Activated CD8-positive, alpha-beta T cell treated with anti-CD3 and anti-CD28 coated beads for 36 hours (primary cell): ENCODE measurements at regions of chr22 and their contacts with region 1.

Region 1: DNA sequence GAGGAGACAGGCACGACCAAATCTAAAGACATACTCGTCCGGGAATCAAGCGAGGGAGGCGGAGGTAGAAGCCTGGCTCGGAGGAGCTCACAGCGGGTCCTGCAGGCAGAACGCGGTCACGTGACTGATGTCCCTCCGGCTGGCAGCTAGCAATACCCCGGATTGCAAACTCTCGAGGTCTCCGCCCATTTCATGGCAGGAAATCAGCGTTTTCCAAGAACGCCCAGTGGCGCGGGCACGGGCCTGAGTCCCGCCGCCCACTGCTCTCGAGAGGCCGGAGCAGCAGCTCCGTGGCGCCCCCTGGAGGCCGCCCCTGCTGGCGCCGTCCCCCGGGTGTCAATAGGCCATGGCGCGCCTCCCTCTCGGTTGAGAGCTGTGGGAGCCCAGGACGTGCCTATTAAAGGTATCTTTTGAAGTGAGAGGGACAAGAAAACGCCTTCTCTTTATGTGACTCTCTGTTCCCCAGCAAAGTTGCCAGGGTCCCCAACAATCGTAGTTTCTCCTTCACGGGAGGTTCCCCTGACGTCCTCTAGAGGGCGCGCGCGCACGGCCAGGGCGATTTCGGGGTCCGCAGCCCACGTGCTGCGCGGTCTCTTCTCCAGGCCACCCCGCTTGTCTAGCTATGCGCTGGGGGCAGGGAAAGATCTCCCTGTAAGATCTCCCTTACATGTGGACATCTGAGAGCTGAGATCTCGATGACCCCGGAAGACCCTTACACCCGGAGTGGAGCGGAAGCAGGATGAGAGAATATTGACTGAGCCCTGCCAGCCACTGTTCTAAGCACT is 37.3 kb upstream of the RBFOX2 start:
- DNase-seq: peak; percentile 85
- ATAC-seq: peak; percentile 89
- H3K4me3 Mint-ChIP-seq: peak overlapping the region; percentile 67
- H3K27ac Mint-ChIP-seq: peak overlapping the region; percentile 89
- H3K4me1 Mint-ChIP-seq: peaks cover 8% of the 10 kb centered on the region
- H3K27me3 Mint-ChIP-seq: peaks cover 1% of the 10 kb centered on the region
- CTCF ChIP-seq: peak; percentile 100

Region 2: DNA sequence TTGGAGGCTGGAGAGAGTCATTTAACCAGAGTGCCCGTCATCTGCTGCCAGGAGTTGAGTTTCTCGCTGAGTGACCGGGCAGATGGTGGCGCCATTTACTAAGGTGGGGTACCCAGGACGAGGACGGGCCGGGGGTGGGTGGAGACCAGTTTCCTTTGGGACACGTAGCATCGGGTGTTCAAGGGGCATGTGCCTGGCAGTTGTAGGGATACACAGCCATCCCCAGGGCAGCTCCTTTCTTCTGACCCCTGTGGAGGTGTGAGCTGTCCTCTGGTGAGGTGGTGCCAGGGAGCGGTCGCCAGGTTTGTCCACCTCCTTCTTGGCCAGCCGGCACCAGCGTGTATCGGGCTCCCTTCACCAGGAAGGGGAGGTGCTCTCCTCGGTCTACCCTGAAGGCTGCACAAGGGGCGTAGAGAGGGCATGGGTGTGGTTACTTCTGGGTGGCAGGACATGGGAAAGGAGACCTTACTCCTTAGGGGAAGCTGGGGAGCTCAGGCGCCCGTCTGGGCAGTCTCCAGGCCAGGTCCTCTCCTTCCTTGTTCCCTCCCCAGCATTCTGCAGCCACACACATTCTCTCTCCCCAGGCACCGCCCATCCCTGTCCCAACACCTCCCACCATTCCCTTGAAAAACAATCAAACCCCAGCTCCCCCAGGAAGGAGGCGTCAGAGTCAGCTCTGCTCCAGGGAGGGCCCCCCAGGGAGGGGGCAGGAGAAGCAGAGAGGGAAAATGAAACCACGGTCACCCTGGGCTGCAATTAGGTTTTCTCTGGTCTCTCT is 438.5 kb before region 1 on chr22:
- CTCF ChIA-PET with region 1: interaction called, 11 read pairs
- POLR2A ChIA-PET with region 1: interaction called, 3 read pairs
- intact Hi-C with region 1: no loop called
- DNase-seq: peak; percentile 87
- ATAC-seq: peak; percentile 69
- H3K4me3 Mint-ChIP-seq: peak overlapping the region; percentile 78
- H3K27ac Mint-ChIP-seq: peak overlapping the region; percentile 86
- H3K4me1 Mint-ChIP-seq: peaks cover 26% of the 10 kb centered on the region
- H3K27me3 Mint-ChIP-seq: peaks cover 7% of the 10 kb centered on the region
- CTCF ChIP-seq: peak; percentile 58

Region 3: GRCh38 chr22:35944458-35944857 is 121.5 kb before region 1 on chr22:
- CTCF ChIA-PET with region 1: interaction called, 10 read pairs
- POLR2A ChIA-PET with region 1: no interaction called
- intact Hi-C with region 1: no loop called
- DNase-seq: no peak
- ATAC-seq: no peak
- H3K4me3 Mint-ChIP-seq: no peak overlapping the region
- H3K27ac Mint-ChIP-seq: no peak overlapping the region
- H3K4me1 Mint-ChIP-seq: no peaks in the 10 kb centered on the region
- H3K27me3 Mint-ChIP-seq: peaks cover 3% of the 10 kb centered on the region
- CTCF ChIP-seq: no peak

Region 4: GRCh38 chr22:36037102-36037758 is 28.7 kb before region 1 on chr22:
- CTCF ChIA-PET with region 1: interaction called, 38 read pairs
- POLR2A ChIA-PET with region 1: no interaction called
- intact Hi-C with region 1: no loop called
- DNase-seq: no peak
- ATAC-seq: no peak
- H3K4me3 Mint-ChIP-seq: no peak overlapping the region
- H3K27ac Mint-ChIP-seq: no peak overlapping the region
- H3K4me1 Mint-ChIP-seq: no peaks in the 10 kb centered on the region
- H3K27me3 Mint-ChIP-seq: peaks cover 27% of the 10 kb centered on the region
- CTCF ChIP-seq: no peak

Region 5: DNA sequence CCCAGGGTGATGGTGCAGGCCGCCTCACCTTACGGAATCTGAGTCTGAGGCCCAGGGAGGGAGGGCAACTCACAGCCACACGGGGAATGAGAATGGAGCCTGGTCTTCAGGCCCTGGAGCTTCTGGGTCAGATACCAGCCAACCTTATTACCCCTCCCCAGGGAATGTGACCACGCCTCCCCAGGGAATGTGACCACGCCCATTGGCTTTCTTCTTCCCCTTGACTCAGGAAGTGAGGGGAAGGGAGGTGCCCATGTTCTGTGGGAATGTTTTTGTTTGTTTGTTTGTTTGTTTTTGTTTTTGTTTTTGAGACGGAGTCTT is 20.2 kb after region 1 on chr22:
- CTCF ChIA-PET with region 1: interaction called, 94 read pairs
- POLR2A ChIA-PET with region 1: no interaction called
- intact Hi-C with region 1: no loop called
- DNase-seq: no peak
- ATAC-seq: no peak
- H3K4me3 Mint-ChIP-seq: no peak overlapping the region
- H3K27ac Mint-ChIP-seq: no peak overlapping the region
- H3K4me1 Mint-ChIP-seq: no peaks in the 10 kb centered on the region
- H3K27me3 Mint-ChIP-seq: no peaks in the 10 kb centered on the region
- CTCF ChIP-seq: no peak

Region 6: DNA sequence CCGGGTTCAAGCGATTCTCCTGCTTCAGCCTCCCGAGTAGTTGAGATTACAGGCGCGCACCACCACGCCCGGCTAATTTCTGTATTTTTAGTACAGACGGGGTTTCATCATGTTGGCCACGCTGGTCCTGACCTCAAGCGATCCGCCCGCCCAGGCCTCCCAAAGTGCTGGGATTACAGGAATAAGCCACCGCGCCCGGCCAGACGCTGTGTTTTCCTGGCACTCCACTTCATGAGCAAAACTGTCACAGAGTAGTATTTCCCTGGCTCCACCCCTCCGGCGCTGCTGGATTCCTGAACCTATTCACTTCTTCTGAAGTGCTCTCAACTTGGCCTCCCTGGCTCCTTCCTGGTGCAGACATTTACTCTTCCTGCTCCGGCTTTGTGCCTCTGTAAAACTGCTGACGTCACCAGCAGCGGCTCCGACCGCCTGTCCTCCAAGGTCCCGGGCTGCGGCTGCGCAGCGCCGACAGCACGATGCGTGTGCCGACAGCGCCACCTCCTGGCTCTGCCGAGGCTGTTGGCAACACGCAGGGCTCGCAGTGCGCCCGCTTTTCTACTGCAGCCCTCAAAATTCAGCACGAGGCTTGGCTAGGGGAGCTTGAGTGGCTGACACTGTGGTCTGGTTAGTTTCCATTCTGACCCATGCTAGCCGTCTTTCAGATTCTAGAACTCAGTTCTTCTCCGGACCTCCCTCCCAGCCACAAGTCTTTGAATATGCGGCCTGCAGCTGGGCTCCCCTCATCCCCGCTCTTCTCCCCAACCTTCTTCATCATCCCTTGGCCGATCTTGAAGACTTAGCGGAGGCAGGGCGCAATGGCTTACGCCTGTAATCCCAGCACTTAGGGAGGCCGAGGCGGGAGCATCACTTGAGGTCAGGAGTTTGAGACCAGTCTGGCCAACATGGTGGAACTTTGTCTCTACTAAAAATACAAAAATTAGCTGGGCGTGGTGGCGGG is 58.0 kb after region 1 on chr22:
- CTCF ChIA-PET with region 1: interaction called, 38 read pairs
- POLR2A ChIA-PET with region 1: no interaction called
- intact Hi-C with region 1: no loop called
- DNase-seq: peak; percentile 94
- ATAC-seq: peak; percentile 100
- H3K4me3 Mint-ChIP-seq: peak overlapping the region; percentile 67
- H3K27ac Mint-ChIP-seq: peak overlapping the region; percentile 92
- H3K4me1 Mint-ChIP-seq: peaks cover 11% of the 10 kb centered on the region
- H3K27me3 Mint-ChIP-seq: no peaks in the 10 kb centered on the region
- CTCF ChIP-seq: peak; percentile 96

Region 7: DNA sequence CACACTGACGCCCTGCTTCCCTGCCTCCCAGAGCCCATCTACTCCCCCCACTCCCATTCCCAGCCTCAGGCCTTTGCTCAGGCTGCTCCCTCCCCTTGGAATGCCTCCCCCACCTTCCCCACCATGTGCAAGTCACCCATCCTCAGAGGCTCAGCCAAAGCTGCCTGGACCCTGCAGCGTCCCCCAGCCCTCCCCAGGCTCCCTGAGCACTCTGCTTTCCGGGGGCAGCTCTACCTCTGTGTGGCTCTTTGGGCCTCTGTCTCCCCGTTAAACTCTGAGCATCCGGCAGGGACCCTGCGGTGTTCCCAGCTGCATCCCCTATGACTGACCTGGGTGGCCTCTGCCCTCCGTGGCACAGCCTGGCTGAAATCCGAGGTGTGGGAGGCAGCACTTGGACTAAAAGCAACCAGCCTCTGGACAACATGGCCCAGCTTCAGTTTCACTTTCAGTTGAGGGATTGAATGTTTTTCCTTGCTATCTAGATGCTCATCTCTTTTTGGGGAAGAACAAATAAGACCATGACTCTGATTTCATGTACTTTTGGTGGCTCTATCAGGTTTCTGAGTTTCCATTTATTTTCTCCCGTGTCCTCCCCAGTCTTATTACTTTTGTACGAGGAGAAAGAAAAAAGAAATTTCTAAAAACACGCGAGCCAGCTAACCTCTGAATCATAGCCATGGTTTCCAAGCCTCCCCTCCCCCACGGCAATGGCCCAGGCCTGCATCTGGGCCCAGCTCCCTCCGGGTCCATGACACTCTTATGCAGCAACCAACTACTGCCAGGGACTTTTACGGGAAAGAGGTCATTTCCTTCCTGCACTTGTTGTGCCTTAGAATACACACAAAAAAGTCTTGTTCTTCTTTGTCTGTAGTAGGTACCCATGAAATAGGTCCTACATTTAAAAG is 90.8 kb after region 1 on chr22:
- CTCF ChIA-PET with region 1: interaction called, 21 read pairs
- POLR2A ChIA-PET with region 1: interaction called, 3 read pairs
- intact Hi-C with region 1: no loop called
- DNase-seq: peak; percentile 88
- ATAC-seq: peak; percentile 50
- H3K4me3 Mint-ChIP-seq: peak overlapping the region; percentile 89
- H3K27ac Mint-ChIP-seq: peak overlapping the region; percentile 99
- H3K4me1 Mint-ChIP-seq: peaks cover 87% of the 10 kb centered on the region
- H3K27me3 Mint-ChIP-seq: no peaks in the 10 kb centered on the region
- CTCF ChIP-seq: no peak

Region 8: DNA sequence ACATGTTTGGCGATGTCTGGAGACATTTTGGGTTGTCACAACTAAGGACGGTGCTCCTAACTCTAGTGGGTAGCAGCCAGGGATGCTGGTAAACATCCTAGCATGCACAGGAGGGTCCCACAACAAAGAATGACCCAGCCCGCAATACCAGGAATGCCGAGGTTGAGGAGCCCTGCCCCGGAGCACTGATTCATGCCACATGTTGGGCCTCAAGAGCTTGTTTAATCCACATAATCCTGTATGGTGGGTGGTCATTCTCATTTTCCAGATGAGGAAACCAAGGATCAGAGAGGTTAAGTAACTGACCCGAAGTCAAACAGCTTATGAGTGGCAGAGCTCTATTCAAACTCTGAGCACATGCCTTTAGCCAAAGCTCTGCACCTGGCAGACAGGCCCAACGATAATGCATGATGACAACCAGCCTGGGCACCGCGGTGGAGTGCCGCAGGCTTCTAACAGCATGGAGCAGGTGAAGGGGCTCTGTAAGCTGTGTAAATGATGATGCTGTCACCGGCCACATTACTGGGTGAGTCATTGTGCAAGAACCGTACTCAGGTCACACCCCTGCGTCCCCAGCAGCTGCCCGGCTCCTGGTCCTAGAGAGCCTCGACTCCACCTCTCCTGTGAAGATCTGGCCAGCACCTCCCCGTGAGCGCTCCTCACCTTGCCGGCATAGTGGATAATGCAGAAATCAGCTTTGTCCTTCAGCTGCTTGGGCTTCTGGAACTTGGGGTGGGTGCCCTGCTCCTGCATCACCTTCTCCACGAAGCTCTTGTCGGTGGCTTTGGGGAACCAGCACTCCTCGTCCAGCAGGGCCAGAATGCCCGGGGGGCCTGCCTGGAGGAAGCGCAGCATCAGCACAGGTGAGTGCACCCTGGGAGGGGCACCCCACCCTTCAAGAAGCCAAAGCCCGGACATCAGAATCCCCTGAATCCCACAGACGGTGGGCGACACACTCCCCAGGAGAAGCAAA is 245.7 kb after region 1 on chr22:
- CTCF ChIA-PET with region 1: no interaction called
- POLR2A ChIA-PET with region 1: no interaction called
- intact Hi-C with region 1: no loop called
- DNase-seq: no peak
- ATAC-seq: no peak
- H3K4me3 Mint-ChIP-seq: no peak overlapping the region
- H3K27ac Mint-ChIP-seq: peak overlapping the region; percentile 30
- H3K4me1 Mint-ChIP-seq: peaks cover 6% of the 10 kb centered on the region
- H3K27me3 Mint-ChIP-seq: no peaks in the 10 kb centered on the region
- CTCF ChIP-seq: no peak

Region 9: DNA sequence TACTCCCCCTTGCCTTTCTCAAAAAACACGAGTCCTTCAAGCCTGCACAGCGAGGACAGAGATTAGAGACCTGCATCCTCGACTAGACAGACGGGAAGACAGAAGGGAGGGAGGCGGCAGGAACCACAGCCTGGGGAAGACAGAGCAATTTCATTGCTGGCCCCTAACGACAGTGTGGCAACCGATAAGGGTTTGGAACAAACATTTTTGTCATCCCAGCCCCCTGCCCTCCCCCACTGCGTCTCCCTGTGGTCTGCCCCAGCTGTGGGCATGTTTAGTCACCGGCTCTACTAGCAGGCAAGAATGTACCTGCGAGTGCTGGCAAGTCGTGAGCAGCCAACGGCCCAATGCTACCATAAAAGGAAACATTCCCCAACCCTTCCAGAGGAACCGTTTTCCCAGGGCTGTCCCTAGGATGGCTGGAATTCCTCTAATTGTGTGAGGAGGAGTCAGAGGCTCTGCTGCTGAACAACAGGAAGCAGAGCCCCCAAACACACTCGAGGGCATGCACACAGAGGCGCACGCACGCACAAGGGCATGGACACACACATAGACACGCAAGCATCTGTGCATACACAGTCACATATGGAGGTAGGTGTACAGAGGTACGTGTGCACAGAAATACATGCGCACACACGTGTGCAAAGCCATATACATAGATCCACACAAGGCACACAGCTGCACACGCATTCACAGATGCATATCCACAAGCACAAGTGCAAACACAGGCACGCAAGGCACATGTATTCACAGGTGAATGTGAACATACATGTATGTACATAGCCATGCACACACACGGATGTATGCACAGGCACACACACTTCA is 263.5 kb after region 1 on chr22:
- CTCF ChIA-PET with region 1: no interaction called
- POLR2A ChIA-PET with region 1: no interaction called
- intact Hi-C with region 1: no loop called
- DNase-seq: peak; percentile 95
- ATAC-seq: peak; percentile 51
- H3K4me3 Mint-ChIP-seq: peak overlapping the region; percentile 90
- H3K27ac Mint-ChIP-seq: peak overlapping the region; percentile 100
- H3K4me1 Mint-ChIP-seq: peaks cover 80% of the 10 kb centered on the region
- H3K27me3 Mint-ChIP-seq: no peaks in the 10 kb centered on the region
- CTCF ChIP-seq: no peak